SK-N-SH (cell line): ENCODE measurements at regions of chr12 and their contacts with region 1.

Region 1: GRCh38 chr12:76586764-76587395 is 27.3 kb upstream of the OSBPL8 start:
- DNase-seq: peak; percentile 16
- H3K4me3 ChIP-seq: no peak overlapping the region
- H3K27ac ChIP-seq: no peak overlapping the region
- H3K4me1 ChIP-seq: no peaks in the 10 kb centered on the region
- H3K27me3 ChIP-seq: no peaks in the 10 kb centered on the region
- CTCF ChIP-seq: peak; percentile 88
- EP300 ChIP-seq: no peak
- RAD21 ChIP-seq: peak; percentile 83

Region 2: GRCh38 chr12:76559400-76560085 is 27.3 kb before region 1 on chr12 and contains the start of gene OSBPL8:
- CTCF ChIA-PET with region 1: interaction called, 12 read pairs
- POLR2A ChIA-PET with region 1: no interaction called
- DNase-seq: peak; percentile 96
- H3K4me3 ChIP-seq: peak within 1 kb of the TSS; percentile 98 to 99
- H3K27ac ChIP-seq: peak within 1 kb of the TSS; percentile 80 to 96
- H3K4me1 ChIP-seq: peaks cover 10 to 11% of the 10 kb centered on the region in 2 experiments; a peak in 3 of 4 replicates
- H3K27me3 ChIP-seq: no peaks in the 10 kb centered on the region
- CTCF ChIP-seq: peak; percentile 32
- EP300 ChIP-seq: 0 out of 4 replicates have a peak, but pooled peaks of 1 of the 2 experiments have one; percentile 20
- RAD21 ChIP-seq: peak; percentile 44
- polyA plus RNA-seq, gene OSBPL8: 9.5 and 10.6 TPM in 2 replicates

Region 3: DNA sequence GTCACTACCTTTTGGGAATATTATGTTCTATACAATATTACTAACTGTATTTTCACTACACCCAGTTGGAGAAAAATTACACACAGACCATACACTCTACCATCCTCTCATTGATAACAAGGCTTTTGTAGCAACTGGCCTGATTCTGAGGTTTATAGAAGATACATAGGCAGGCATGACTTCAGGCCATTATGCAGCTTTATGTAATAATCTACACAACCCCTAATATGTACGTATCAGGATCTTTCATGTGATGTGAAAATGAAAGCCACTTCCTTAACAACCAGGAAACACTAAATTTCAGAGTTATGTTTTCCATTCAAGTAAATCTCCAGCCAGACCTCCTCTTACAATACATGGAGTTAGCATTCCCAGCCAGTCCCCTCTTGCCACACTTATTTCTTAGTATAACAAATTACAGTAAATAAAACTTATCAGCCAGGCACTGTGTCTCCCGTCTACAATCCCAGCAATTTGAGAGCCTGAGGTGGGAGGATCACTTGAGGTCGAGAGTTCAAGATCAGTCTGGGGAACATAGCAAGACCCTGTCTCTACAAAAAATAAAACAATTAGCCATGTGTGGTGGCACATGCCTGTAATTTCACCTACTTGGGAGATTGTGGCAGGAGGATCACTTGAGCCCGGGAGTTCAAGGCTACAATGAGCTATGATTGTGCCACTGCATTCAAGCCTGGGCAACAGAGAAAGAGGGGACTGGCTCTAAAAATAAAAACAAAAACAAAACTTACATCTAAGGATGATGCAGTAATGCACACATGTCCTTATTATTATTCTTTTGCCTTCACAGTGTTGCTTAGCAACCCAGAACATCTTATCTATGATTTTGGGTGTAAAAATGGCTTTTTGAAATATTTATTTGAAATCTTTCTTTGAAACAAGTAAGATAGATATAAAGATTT is 16.9 kb before region 1 on chr12:
- CTCF ChIA-PET with region 1: interaction called, 16 read pairs
- POLR2A ChIA-PET with region 1: no interaction called
- DNase-seq: no peak
- H3K4me3 ChIP-seq: no peak overlapping the region
- H3K27ac ChIP-seq: no peak overlapping the region
- H3K4me1 ChIP-seq: no peaks in the 10 kb centered on the region
- H3K27me3 ChIP-seq: no peaks in the 10 kb centered on the region
- CTCF ChIP-seq: no peak
- EP300 ChIP-seq: no peak
- RAD21 ChIP-seq: no peak